Breast epithelium (tissue), 4 donors: ENCODE measurements at regions of chr15 and their contacts with region 1.

Region 1: DNA sequence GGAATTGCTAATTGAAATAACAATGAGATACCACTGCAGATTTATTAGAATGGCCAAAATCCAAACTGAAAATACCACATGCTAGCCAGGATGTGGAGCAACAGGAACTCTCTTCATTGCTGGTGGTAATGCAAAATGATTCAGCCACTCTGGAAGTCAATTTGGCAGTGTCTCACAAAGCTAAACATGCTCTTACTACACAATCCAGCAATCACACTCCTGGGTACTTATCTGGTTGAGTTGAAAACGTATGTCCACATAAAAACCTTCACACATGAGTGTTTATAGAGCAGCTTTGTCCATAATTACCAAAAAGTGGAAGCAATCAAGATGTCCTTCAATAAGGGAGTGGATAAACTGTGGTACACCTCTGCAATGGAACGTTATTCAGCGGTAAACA is 113.3 kb downstream of the SMAD6 start:
- DNase-seq: no peak
- H3K4me3 ChIP-seq: no peak overlapping the region
- H3K27ac ChIP-seq: no peak overlapping the region
- H3K4me1 ChIP-seq: no peaks in the 10 kb centered on the region
- H3K27me3 ChIP-seq: no peaks in the 10 kb centered on the region
- CTCF ChIP-seq: no peak
- POLR2A ChIP-seq: no peak

Region 2: GRCh38 chr15:65195548-65195923 is 1619.8 kb before region 1 on chr15:
- intact Hi-C with region 1: no loop called
- DNase-seq: no peak
- H3K4me3 ChIP-seq: no peak overlapping the region
- H3K27ac ChIP-seq: peak overlapping the region; percentile 40 to 80
- H3K4me1 ChIP-seq: no peaks in the 10 kb centered on the region
- H3K27me3 ChIP-seq: no peaks in the 10 kb centered on the region
- CTCF ChIP-seq: no peak
- POLR2A ChIP-seq: no peak

Region 3: GRCh38 chr15:67914537-67915460 is 1099.5 kb after region 1 on chr15:
- intact Hi-C with region 1: loop called (anchors 10 kb)
- DNase-seq: no peak
- H3K4me3 ChIP-seq: no peak overlapping the region
- H3K27ac ChIP-seq: peak overlapping the region; percentile 64 to 80
- H3K4me1 ChIP-seq: no peaks in the 10 kb centered on the region
- H3K27me3 ChIP-seq: no peaks in the 10 kb centered on the region
- CTCF ChIP-seq: no peak
- POLR2A ChIP-seq: no peak